ENCODE measurements at regions of chr17 and their contacts with region 1.

Region 1: DNA sequence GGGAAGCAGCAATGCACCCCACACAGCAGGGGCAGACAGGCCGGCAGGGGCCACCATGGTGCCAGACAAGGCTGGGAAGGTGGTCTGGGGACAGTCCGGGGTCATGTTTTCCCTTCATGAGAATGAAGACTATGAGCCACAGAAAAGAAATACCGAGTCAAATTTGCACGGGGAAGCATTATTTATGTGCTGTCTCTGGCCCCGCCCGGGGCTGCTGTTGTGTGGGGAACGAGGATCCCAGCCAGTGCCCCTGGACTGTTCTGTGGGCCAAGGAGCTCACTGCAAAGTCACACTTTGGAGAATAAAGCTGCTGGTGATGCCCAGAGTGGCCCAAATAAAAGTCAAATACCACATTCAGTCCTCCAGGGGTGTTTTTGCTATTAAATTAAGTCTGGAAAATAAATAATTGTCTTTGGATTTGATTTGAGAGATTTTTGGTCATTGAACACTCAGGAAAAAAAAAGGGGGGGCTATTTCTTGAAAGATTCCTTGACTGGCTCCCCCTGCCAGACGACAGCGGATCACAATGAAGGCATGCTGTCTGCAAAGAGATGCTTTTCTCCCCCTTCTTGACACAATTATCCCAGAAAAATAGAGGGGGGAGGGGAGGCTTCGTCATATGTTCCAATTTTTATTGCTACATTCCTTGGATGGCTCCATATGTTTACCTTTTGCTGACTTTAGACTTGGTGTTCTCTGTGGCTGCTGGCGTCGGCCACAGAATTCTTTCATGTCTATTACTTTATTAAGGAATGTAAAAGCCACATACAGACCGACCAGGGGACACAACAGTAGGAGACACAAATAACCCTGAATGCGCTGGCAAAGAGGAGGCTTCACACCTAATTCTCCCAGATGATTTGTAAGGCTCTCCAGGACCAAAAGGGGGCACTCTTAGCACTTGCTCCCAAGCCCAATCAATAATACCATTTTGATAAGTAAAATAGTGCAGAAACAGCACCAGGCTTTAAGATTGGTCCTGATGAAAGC is 27.1 kb upstream of the ANKFN1 start:
- DNase-seq: peak; percentile 74
- ATAC-seq: peak; percentile 75
- H3K4me3 ChIP-seq: no peak overlapping the region
- H3K27ac ChIP-seq: no peak overlapping the region
- H3K4me1 ChIP-seq: peaks cover 1% of the 10 kb centered on the region; the same call in 1 of the 2 replicates
- H3K27me3 ChIP-seq: no peaks in the 10 kb centered on the region
- CTCF ChIP-seq: peak; percentile 79
- POLR2A ChIP-seq: no peak
- RAD21 ChIP-seq: peak; percentile 88

Region 2: GRCh38 chr17:56099649-56100048 is 26.5 kb before region 1 on chr17:
- CTCF ChIA-PET with region 1: no interaction called
- POLR2A ChIA-PET with region 1: no interaction called
- dilution Hi-C with region 1: no loop called
- in situ Hi-C with region 1: no loop called
- intact Hi-C with region 1: no loop called
- DNase-seq: peak; percentile 8
- ATAC-seq: no peak
- H3K4me3 ChIP-seq: no peak overlapping the region
- H3K27ac ChIP-seq: no peak overlapping the region
- H3K4me1 ChIP-seq: peaks cover 2% of the 10 kb centered on the region
- H3K27me3 ChIP-seq: no peaks in the 10 kb centered on the region
- CTCF ChIP-seq: no peak
- POLR2A ChIP-seq: no peak
- RAD21 ChIP-seq: no peak

Region 3: DNA sequence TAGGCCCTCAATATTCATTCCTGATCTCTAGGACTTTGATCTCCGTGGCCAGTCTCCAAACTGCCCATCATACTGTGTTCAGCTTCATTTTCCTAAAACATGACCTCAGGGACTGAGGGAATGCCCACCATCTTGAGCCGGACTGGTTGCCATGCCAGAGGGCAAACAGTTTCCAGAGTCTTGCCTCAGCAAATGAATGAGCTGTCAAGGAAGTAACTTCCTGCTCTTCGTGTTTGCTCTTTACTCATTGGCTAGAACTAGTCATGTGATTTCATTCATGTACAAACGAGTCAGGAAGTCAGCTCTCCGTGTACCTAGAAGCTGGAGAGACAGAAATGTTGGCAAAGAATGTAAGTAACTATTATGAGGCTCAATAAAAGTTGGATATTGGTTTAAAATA is 77.3 kb after region 1 on chr17:
- CTCF ChIA-PET with region 1: no interaction called
- POLR2A ChIA-PET with region 1: no interaction called
- dilution Hi-C with region 1: no loop called
- in situ Hi-C with region 1: no loop called
- intact Hi-C with region 1: no loop called
- DNase-seq: no peak
- ATAC-seq: no peak
- H3K4me3 ChIP-seq: no peak overlapping the region
- H3K27ac ChIP-seq: no peak overlapping the region
- H3K4me1 ChIP-seq: no peaks in the 10 kb centered on the region
- H3K27me3 ChIP-seq: no peaks in the 10 kb centered on the region
- CTCF ChIP-seq: no peak
- POLR2A ChIP-seq: no peak
- RAD21 ChIP-seq: no peak

Region 4: GRCh38 chr17:56313201-56313600 is 187.1 kb after region 1 on chr17:
- CTCF ChIA-PET with region 1: interaction called, 8 read pairs
- POLR2A ChIA-PET with region 1: no interaction called
- dilution Hi-C with region 1: no loop called
- in situ Hi-C with region 1: loop called (anchors 5 kb)
- intact Hi-C with region 1: no loop called
- DNase-seq: no peak
- ATAC-seq: no peak
- H3K4me3 ChIP-seq: no peak overlapping the region
- H3K27ac ChIP-seq: no peak overlapping the region
- H3K4me1 ChIP-seq: no peaks in the 10 kb centered on the region; the same call in 1 of the 2 replicates
- H3K27me3 ChIP-seq: no peaks in the 10 kb centered on the region
- CTCF ChIP-seq: no peak
- POLR2A ChIP-seq: no peak
- RAD21 ChIP-seq: no peak

Region 5: DNA sequence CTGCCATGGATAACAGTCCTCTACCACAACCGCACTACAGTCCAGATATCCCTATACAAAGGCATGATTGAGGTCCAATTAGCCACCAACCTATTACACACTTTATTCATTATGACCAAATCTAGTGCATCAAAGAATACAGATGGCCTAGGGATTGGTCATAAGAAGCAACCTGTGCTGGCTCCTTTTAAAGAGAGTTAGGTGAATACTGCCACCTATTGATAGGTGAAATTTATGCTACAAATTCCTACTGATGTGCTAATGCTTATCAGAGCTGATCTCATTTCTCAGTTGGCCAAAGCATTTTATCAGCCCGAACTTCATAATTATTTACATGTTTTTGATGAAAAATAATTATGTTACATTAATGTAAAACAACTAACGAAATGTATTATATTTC is 193.4 kb after region 1 on chr17:
- CTCF ChIA-PET with region 1: interaction called, 15 read pairs
- POLR2A ChIA-PET with region 1: no interaction called
- dilution Hi-C with region 1: no loop called
- in situ Hi-C with region 1: loop called (anchors 5 kb)
- intact Hi-C with region 1: loop called (anchors 1 kb)
- DNase-seq: peak; percentile 70
- ATAC-seq: peak; percentile 79
- H3K4me3 ChIP-seq: no peak overlapping the region
- H3K27ac ChIP-seq: no peak overlapping the region
- H3K4me1 ChIP-seq: peaks cover 3% of the 10 kb centered on the region
- H3K27me3 ChIP-seq: peaks cover 1% of the 10 kb centered on the region; the same call in 1 of the 2 replicates
- CTCF ChIP-seq: peak; percentile 66
- POLR2A ChIP-seq: no peak
- RAD21 ChIP-seq: peak; percentile 77

Region 6: GRCh38 chr17:56451629-56452028 is 325.5 kb after region 1 on chr17:
- CTCF ChIA-PET with region 1: no interaction called
- POLR2A ChIA-PET with region 1: no interaction called
- dilution Hi-C with region 1: no loop called
- in situ Hi-C with region 1: loop called (anchors 10 kb)
- intact Hi-C with region 1: no loop called
- DNase-seq: peak; percentile 25
- ATAC-seq: peak; percentile 35; the same call in 1 of the 2 replicates
- H3K4me3 ChIP-seq: no peak overlapping the region
- H3K27ac ChIP-seq: no peak overlapping the region
- H3K4me1 ChIP-seq: no peaks in the 10 kb centered on the region
- H3K27me3 ChIP-seq: no peaks in the 10 kb centered on the region
- CTCF ChIP-seq: no peak
- POLR2A ChIP-seq: no peak
- RAD21 ChIP-seq: no peak

Region 7: DNA sequence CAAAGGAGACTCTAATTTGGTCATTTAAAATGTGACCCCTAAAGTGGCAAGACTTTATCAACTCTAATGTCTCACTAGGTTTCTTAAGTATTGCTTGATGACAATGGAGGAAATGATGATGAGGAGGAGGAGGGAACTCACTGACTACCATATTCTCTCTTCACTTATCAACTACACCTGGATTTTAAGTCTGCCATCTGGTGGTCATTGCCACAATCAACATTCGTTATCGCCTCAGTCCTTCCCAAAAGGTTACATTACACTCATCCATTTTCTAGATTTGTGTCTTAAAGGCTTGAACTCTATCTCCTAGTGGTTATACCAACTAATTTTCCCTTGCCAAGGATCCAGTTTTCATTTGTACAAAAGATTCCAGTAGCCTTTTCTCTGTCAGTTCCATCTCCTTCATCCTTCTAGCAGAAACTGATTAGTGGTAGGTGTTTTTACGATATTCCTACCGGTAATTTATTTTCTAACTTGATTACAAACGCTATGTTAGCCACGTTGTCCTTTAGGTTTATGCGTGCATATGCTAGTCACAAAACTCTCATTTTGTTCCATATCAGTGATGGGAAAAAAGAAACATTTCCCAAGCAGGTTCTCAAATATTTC is 352.8 kb after region 1 on chr17:
- CTCF ChIA-PET with region 1: no interaction called
- POLR2A ChIA-PET with region 1: no interaction called
- dilution Hi-C with region 1: no loop called
- in situ Hi-C with region 1: no loop called
- intact Hi-C with region 1: loop called (anchors 1 kb)
- DNase-seq: peak; percentile 25
- ATAC-seq: no peak
- H3K4me3 ChIP-seq: no peak overlapping the region
- H3K27ac ChIP-seq: no peak overlapping the region
- H3K4me1 ChIP-seq: no peaks in the 10 kb centered on the region
- H3K27me3 ChIP-seq: no peaks in the 10 kb centered on the region; the same call in 1 of the 2 replicates
- CTCF ChIP-seq: peak; percentile 48
- POLR2A ChIP-seq: no peak
- RAD21 ChIP-seq: peak; percentile 50

Measured in IMR-90 (cell line).